Astrocyte of the cerebellum (primary cell): ENCODE measurements at regions of chr10 and their contacts with region 1.

Region 1: DNA sequence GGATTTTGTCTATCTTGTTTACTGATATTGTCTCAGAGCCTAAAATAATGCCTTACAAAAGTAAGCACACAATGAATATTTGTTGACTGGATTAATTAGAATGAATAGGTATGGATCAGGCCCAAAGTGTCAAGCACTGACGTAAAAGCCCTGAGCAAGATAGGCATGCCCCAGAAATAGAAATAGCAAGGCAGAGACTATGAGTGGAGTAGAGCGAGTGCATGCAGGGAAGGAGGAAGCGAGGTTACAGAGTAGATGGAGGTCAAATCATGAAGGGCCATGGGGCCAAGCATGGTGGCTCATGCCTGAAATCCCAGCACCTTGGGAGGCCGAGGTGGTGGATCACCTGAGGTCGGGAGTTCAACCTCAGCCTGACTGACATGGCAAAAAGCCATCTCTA is 51.6 kb upstream of the SFTPD start:
- DNase-seq: no peak
- H3K4me3 ChIP-seq: no peak overlapping the region
- CTCF ChIP-seq: no peak

Region 2: GRCh38 chr10:79948976-79949722 is 51.4 kb before region 1 on chr10 and contains the start of gene SFTPD:
- in situ Hi-C with region 1: loop called (anchors 10 kb)
- DNase-seq: no peak
- H3K4me3 ChIP-seq: no peak within 1 kb of the TSS
- CTCF ChIP-seq: no peak

Region 3: DNA sequence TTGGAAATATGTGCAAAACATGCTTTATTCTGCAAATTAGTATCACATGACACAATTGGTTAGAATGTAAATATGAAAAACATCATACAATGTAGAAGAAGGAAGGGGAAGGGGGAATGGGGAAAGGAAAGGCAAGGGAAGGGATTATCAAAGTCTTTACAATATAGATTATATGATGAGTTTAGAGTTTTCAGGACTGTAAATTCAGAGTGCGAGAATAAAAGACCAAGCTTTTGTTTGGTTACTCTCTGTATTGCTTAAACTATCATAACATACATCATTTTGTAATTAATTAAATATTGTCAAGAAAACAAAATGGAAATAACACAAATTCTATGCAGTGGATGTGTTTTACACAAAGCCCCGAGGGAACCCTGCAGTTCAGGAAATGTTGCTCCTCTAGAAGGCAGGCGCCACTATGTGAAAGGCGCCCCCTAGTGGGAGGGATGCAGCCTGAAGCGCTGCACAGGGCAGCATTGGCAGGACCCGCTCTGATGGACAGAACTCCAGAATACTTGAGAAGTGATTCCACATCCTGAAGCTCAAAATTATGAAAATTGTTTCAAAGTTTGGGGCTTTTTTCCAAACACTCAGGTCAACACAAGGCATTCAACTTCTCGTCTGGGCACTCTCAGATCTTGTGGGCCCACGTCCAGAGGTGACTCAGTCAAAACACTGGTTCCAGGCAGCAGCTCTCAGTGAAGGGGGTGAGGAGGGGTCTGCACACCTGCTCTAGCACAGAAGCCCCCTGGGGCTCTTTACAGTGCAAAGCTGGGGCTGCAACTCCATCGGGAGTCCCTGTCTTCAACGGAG is 46.3 kb after region 1 on chr10:
- in situ Hi-C with region 1: no loop called
- DNase-seq: peak; percentile 20
- H3K4me3 ChIP-seq: no peak overlapping the region
- CTCF ChIP-seq: peak; percentile 90